AG04450 (cell line): ENCODE measurements at regions of chr14 and their contacts with region 1.

Region 1: DNA sequence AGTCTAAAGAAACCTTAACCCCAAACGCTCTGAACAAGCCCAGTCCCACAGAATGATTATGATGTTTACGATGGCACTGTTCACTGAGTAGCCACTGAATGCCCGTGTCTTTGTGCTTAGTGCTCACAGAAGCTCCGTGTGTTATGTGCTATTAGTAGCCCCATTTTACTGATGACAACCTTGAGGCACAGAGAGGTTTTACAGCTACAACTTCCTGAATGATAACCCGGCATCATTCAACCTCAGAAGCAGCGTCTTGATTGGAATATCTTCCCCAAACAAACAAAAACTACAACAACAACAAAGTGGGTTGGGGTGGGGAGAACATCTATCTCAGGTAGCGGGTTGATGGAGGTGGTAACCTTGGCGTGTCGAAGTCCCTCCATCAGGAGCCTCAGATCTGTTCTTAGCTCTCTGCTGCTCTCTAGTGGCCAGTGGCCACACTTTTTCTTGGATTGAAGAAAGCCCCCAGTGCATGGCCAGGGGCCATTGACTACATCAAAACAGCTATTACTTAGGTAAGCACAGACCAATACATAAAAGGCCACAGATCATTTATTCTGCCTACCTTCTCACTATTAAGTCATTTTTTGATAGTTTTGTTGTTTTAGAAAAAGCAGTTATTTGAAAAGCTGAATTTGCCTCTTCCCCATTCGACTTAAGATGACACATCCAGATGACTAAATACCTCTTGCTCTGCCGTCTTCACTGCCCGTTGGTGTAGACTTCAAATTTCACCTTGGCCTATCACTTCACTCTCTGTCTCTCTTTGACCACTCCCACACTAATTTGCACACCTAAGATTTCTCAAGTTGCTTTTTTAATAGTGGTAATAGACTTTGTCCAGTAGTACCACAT is 376.9 kb downstream of the GALC start:
- DNase-seq: peak; percentile 3
- H3K4me3 ChIP-seq: no peak overlapping the region
- H3K27ac ChIP-seq: no peak overlapping the region
- H3K27me3 ChIP-seq: no peaks in the 10 kb centered on the region
- CTCF ChIP-seq: peak; percentile 83

Region 2: GRCh38 chr14:87049950-87050349 is 566.1 kb before region 1 on chr14:
- CTCF ChIA-PET with region 1: interaction called, 25 read pairs
- POLR2A ChIA-PET with region 1: no interaction called
- DNase-seq: peak; percentile 3
- H3K4me3 ChIP-seq: no peak overlapping the region
- H3K27ac ChIP-seq: no peak overlapping the region
- H3K27me3 ChIP-seq: no peaks in the 10 kb centered on the region
- CTCF ChIP-seq: peak; percentile 78

Region 3: DNA sequence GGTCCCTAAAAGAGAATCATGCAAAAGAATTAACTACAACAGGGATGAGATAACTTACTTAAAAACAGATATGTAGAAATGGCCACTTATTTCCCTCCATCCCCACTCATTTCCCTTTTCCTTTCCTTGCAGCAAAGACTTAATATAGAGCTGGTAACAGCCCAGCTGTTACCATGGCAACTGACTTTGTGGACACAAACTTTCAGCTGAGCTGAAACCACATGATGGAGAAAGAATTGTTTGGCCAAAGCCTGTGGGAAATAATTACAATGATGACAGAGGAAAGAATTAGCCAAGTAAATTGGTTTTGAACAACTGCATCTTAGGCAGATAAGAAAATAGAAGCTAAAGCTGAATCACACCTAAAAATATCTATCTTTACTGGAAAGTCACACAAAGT is 12.1 kb after region 1 on chr14:
- CTCF ChIA-PET with region 1: interaction called, 14 read pairs
- POLR2A ChIA-PET with region 1: no interaction called
- DNase-seq: peak; percentile 10
- H3K4me3 ChIP-seq: no peak overlapping the region
- H3K27ac ChIP-seq: no peak overlapping the region
- H3K27me3 ChIP-seq: no peaks in the 10 kb centered on the region
- CTCF ChIP-seq: no peak